Activated CD8-positive, alpha-beta memory T cell treated with anti-CD3 and anti-CD28 coated beads, Interleukin-2, amount 10 ng/mL, durations not matched to agents 7 days and 5 days (primary cell): ENCODE measurements at regions of chr19 and their contacts with region 1.

Region 1: DNA sequence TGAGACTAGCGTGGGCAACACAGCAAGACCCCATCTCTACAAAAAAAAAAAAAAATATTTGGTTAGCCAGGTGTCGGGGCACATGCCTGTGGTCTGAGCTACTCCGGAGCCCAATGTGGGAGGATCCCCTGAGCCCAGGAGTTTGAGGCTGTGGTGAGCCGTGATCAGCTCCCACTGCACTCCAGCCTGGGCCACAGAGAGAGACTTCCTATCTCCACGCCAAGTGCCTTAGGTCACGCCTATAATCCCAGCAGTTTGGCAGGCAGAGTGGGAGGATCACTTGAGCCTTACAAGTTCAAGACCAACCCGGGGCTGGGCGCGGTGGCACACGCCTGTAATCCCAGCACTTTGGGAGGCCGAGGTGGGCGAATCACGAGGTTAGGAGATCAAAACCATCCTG is 8.7 kb upstream of the ADAT3 start:
- DNase-seq: no peak
- ATAC-seq: no peak
- H3K4me3 Mint-ChIP-seq: peak overlapping the region; percentile 82
- H3K27ac Mint-ChIP-seq: peak overlapping the region; percentile 98
- H3K4me1 Mint-ChIP-seq: peaks cover 43% of the 10 kb centered on the region
- H3K27me3 Mint-ChIP-seq: no peaks in the 10 kb centered on the region

Region 2: GRCh38 chr19:1863726-1864480 is 32.6 kb before region 1 on chr19:
- CTCF ChIA-PET with region 1: interaction called, 16 read pairs
- DNase-seq: peak; percentile 95
- ATAC-seq: peak; percentile 79
- H3K4me3 Mint-ChIP-seq: peak overlapping the region; percentile 69
- H3K27ac Mint-ChIP-seq: peak overlapping the region; percentile 78
- H3K4me1 Mint-ChIP-seq: peaks cover 34% of the 10 kb centered on the region
- H3K27me3 Mint-ChIP-seq: no peaks in the 10 kb centered on the region

Region 3: DNA sequence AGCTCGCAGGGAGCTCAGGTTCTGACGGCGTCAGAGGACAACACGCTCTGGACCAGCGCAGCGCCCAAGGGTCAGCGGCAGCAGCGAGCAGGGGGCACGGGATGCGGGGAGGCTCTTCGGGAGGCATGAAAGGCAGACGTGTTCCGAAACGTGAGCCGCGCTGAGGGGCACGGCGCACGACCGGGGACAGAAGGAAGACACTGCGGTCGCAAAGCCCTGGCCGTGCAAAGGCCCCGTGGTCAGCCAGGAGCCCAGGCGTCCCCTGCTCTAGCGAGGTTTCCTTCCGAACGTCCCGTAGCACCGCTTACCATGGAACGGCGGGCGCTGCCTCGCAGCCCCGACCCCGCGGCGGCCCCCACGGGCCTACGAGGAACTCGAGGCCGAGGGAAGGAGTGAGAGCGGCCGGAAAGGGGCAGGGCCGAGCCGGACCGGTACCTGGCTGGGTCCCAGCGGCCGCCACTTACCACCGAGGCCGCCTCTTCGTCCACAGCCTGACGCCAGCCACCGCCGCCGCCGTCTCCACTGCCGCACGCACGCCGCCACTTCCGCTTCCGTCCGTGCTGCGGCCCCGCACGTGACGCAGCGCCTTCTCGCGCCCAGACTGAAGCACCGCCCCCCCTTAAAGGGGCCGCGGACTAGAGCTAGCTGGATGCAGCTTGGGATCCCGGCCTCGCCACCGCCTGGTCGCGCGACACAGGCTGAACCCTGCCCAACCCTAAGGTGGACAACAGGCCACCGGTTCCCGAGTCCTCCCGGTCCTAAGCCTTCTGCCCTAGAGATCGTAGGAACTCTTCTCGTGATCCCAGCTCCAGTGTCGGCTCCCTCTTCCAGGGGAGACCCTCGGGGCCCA is 20.6 kb before region 1 on chr19:
- CTCF ChIA-PET with region 1: interaction called, 27 read pairs
- DNase-seq: peak; percentile 93
- ATAC-seq: peak; percentile 87
- H3K4me3 Mint-ChIP-seq: peak overlapping the region; percentile 99
- H3K27ac Mint-ChIP-seq: peak overlapping the region; percentile 98
- H3K4me1 Mint-ChIP-seq: peaks cover 31% of the 10 kb centered on the region
- H3K27me3 Mint-ChIP-seq: no peaks in the 10 kb centered on the region

Region 4: DNA sequence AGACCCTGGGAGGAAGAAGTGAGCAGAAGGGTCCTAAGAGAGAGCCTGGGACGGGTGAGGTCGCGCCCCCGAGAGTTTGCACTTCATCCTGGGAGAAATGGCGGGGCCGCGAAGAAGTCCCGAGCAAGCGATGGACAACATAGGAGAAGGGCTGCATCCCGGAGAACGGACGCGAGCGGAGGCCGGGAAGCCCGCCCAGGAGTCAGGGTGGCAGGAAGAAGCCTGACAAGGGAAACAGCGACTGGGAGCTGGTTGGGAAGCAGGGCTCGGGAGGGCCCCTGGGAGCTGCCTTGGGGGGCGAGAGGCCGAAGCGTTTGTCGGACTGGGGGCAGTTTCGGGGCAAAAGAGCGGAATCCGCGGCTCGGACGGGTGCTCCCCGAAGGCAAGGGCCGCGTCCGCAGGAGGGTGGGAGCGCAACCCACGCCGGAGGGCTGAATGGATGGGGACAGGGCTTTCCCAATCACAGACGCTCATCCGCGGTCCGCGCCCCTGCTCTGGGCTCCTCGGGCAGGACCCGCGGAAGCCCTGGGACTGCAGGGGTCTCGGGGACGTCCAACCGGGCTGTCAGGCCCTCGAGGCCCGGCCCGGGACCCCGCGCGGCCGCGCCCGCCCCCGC is 11.7 kb before region 1 on chr19:
- CTCF ChIA-PET with region 1: interaction called, 13 read pairs
- DNase-seq: no peak
- ATAC-seq: peak; percentile 10
- H3K4me3 Mint-ChIP-seq: peak overlapping the region; percentile 90
- H3K27ac Mint-ChIP-seq: peak overlapping the region; percentile 98
- H3K4me1 Mint-ChIP-seq: peaks cover 39% of the 10 kb centered on the region
- H3K27me3 Mint-ChIP-seq: no peaks in the 10 kb centered on the region

Region 5: GRCh38 chr19:1912760-1913505 is 16.4 kb after region 1 on chr19:
- CTCF ChIA-PET with region 1: no interaction called
- DNase-seq: no peak
- ATAC-seq: no peak
- H3K4me3 Mint-ChIP-seq: no peak overlapping the region
- H3K27ac Mint-ChIP-seq: no peak overlapping the region
- H3K4me1 Mint-ChIP-seq: peaks cover 22% of the 10 kb centered on the region
- H3K27me3 Mint-ChIP-seq: no peaks in the 10 kb centered on the region